Lower leg skin (tissue), 4 donors: ENCODE measurements at regions of chr6 and their contacts with region 1.

Region 1: DNA sequence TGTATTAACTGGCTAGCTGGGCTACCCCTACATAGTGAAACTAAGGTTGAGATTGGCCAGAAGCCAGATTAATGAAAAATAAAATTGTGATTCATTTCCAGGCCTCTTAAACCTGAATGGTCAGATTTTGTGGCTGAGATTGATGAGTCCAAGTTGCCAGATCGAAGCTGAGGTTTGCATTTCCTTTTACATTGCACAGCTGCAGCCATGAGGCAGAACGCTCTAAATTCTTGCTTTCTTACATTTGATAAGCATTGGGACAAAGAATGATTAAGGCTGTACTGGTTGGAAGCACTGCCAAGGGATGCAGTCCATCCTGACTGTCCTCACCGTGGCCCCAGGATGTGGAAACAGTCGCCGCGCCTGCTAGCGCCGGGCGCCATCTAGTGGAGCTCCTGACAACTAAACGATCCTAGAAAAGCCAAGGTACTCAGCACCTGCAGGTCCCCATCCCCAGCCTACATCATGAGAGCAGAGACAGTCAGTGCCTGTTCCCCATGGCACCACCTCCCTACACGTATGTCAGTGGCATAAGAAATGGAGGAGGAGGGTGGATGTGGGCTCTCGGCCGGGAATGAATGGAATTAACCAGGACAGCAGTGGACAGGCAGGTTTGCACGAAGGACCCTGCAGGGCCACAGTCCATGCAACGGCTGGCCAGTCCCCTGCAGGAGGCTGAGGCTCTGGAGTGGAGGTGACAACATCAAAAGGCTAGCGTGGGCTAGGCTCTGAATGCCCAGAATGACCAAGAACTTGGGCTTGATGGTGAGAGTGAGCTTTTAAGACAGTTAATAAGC is 19.0 kb downstream of the PXDC1 start:
- DNase-seq: peak in 1 of 2 donors; percentile 66
- H3K4me3 ChIP-seq: no peak overlapping the region
- CTCF ChIP-seq: peak in 1 of 3 donors; percentile 81
- POLR2A ChIP-seq: no peak

Region 2: DNA sequence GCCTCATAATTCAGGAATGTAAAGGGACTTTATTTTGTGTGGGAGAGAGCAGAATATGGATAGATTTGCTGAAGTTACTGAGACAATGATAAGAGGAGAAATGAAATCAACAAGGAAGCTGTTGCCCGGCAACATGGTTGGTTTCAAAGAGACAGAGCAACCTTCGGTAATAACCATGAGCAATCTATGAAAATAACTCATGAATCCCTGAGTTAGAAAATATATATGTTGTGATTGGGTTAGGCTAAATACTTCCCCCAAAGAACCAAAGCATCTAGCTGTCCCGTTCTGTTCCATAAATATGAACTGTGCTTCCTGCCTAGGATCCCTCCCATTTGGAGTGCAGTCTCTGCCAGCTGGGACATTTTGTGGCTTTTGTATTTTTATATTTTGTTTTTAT is 914.0 kb before region 1 on chr6:
- intact Hi-C with region 1: no loop called
- DNase-seq: no peak
- H3K4me3 ChIP-seq: no peak overlapping the region
- CTCF ChIP-seq: no peak
- POLR2A ChIP-seq: no peak

Region 3: GRCh38 chr6:3456755-3457466 is 275.6 kb before region 1 on chr6 and contains the start of gene SLC22A23:
- intact Hi-C with region 1: loop called (anchors 10 kb)
- DNase-seq: peak; percentile 34 to 92
- H3K4me3 ChIP-seq: peak within 1 kb of the TSS; percentile 39
- CTCF ChIP-seq: no peak
- POLR2A ChIP-seq: no peak
- total RNA-seq, gene SLC22A23: 29.2 to 50.7 (median 43.2) TPM

Region 4: GRCh38 chr6:3644739-3645012 is 87.9 kb before region 1 on chr6:
- intact Hi-C with region 1: no loop called
- DNase-seq: peak in 1 of 2 donors; percentile 32
- H3K4me3 ChIP-seq: no peak overlapping the region
- CTCF ChIP-seq: no peak
- POLR2A ChIP-seq: no peak

Region 5: DNA sequence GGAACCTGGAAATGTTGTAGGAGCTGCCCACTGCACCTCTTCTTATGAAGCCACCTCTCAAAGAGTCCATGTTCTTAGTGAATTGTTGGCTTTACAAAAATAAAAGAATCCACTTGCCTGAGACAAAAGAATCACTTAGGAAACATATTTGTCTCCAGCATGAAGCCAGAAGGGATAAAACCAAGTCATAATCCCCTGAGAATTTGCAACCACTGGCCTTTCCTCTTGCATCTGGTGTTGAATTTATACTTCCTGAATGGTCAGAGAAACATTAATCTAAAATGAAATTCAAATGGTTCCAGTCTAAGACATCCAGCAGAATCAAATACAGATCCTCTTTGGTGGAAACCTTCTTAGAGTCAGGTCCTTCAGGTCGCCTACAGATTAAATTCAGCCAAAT is 595.3 kb after region 1 on chr6:
- intact Hi-C with region 1: no loop called
- DNase-seq: no peak
- H3K4me3 ChIP-seq: no peak overlapping the region
- CTCF ChIP-seq: no peak
- POLR2A ChIP-seq: no peak